Activated CD4-positive, alpha-beta T cell treated with anti-CD3 and anti-CD28 coated beads, Interleukin-2, amount 10 ng/mL, durations not matched to agents 24 days and 14 days (primary cell): ENCODE measurements at regions of chr2 and their contacts with region 1.

Region 1: DNA sequence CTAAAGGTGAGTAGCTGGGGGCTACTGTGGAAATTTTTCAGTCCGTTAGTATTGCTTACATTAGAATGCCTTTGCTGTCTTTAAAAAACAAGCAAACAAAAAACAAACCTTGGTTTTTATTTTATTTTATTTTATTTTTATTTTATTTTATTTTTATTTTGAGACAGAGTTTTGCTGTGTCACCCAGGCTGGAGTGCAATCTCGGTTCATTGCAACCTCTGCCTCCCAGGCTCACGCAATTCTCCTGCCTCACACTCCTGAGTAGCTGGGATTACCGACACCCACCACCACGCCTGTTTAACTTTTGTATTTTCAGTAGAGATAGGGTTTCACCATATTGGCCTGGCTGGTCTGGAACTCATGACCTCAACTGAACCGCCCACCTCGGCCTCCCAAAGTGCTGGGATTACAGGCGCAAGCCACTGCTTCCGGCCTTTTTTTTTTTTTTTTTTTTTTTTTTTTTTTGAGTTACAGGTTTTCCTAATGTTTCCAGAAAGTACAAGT is 732.6 kb downstream of the KCNJ3 start:
- DNase-seq: no peak
- H3K4me3 Mint-ChIP-seq: no peak overlapping the region
- H3K27ac Mint-ChIP-seq: no peak overlapping the region
- H3K4me1 Mint-ChIP-seq: no peaks in the 10 kb centered on the region
- H3K27me3 Mint-ChIP-seq: no peaks in the 10 kb centered on the region

Region 2: GRCh38 chr2:155095241-155096012 is 335.6 kb before region 1 on chr2:
- intact Hi-C with region 1: no loop called
- DNase-seq: no peak
- H3K4me3 Mint-ChIP-seq: no peak overlapping the region
- H3K27ac Mint-ChIP-seq: no peak overlapping the region
- H3K4me1 Mint-ChIP-seq: no peaks in the 10 kb centered on the region
- H3K27me3 Mint-ChIP-seq: no peaks in the 10 kb centered on the region

Region 3: GRCh38 chr2:155456222-155456621 is 25.2 kb after region 1 on chr2:
- intact Hi-C with region 1: loop called (anchors 2 kb)
- DNase-seq: no peak
- H3K4me3 Mint-ChIP-seq: no peak overlapping the region
- H3K27ac Mint-ChIP-seq: no peak overlapping the region
- H3K4me1 Mint-ChIP-seq: no peaks in the 10 kb centered on the region
- H3K27me3 Mint-ChIP-seq: no peaks in the 10 kb centered on the region